Activated CD4-positive, alpha-beta memory T cell treated with anti-CD3 and anti-CD28 coated beads, Interleukin-2, amount 10 ng/mL, durations not matched to agents 7 days and 5 days (primary cell): ENCODE measurements at regions of chr12 and their contacts with region 1.

Region 1: DNA sequence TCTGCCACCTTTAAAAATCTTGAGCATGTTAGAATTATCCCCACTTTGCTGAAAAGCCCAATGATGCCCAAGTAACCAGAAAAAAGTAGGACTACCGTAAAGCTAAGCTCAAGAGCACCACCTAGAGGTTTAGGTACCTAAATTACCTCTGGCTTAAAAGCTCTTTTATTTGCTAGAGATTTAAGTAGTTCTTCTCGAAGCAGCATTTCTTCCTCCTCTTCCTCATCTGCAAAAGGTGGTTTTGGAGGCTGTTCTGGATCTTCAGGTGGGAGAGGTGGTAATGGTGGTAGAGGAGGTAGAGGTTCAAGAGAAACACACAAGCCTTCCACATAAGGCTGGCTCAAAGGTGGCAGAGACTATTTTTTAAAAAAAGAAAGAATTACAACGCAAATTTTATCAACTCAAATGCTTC is 26.9 kb downstream of the ZFC3H1 start:
- DNase-seq: no peak
- H3K4me3 Mint-ChIP-seq: no peak overlapping the region
- H3K27ac Mint-ChIP-seq: no peak overlapping the region
- H3K4me1 Mint-ChIP-seq: peaks cover 14% of the 10 kb centered on the region
- H3K27me3 Mint-ChIP-seq: no peaks in the 10 kb centered on the region

Region 2: GRCh38 chr12:71415336-71416231 is 221.1 kb before region 1 on chr12:
- CTCF ChIA-PET with region 1: interaction called, 16 read pairs
- POLR2A ChIA-PET with region 1: no interaction called
- DNase-seq: no peak
- H3K4me3 Mint-ChIP-seq: no peak overlapping the region
- H3K27ac Mint-ChIP-seq: no peak overlapping the region
- H3K4me1 Mint-ChIP-seq: no peaks in the 10 kb centered on the region
- H3K27me3 Mint-ChIP-seq: peaks cover 15% of the 10 kb centered on the region

Region 3: GRCh38 chr12:71430756-71431155 is 206.0 kb before region 1 on chr12:
- CTCF ChIA-PET with region 1: no interaction called
- POLR2A ChIA-PET with region 1: no interaction called
- DNase-seq: no peak
- H3K4me3 Mint-ChIP-seq: no peak overlapping the region
- H3K27ac Mint-ChIP-seq: no peak overlapping the region
- H3K4me1 Mint-ChIP-seq: no peaks in the 10 kb centered on the region
- H3K27me3 Mint-ChIP-seq: peaks cover 26% of the 10 kb centered on the region

Region 4: DNA sequence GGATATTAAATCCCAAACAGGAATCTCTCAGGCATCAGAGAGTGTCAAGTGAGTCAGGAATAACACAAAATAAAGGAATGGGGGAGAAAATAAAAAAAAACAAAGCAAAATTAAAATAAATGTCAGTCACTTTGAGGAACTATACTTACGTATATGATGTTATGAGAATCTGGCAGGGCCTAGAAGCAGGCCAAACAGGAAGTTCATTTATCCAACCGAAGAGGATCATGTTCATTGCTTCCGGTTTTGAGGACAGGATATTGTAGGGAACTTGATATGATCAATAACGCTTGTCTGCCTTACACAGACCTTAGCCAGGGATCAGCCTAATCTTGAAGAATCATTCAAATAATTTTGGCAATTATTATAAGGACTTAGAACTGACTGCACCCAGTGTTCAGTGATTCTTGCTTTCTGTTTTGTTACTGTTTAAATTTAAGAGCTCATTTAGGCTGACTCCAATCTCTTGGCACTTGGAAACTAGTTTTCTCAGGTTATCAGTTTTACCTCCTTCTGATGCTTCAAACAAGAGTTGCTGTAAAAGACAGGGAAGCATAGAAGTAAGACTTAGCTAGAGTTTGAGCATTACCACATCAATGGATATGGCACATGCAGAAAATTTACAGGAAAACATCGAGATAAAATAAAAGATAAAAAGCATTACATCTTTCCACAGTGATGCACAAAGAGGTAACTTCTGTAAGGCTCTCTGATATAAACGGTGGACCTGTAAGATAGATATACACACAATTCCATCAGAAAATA is 26.5 kb before region 1 on chr12:
- CTCF ChIA-PET with region 1: interaction called, 13 read pairs
- POLR2A ChIA-PET with region 1: interaction called, 3 read pairs
- DNase-seq: no peak
- H3K4me3 Mint-ChIP-seq: no peak overlapping the region
- H3K27ac Mint-ChIP-seq: peak overlapping the region; percentile 63
- H3K4me1 Mint-ChIP-seq: peaks cover 18% of the 10 kb centered on the region
- H3K27me3 Mint-ChIP-seq: no peaks in the 10 kb centered on the region

Region 5: DNA sequence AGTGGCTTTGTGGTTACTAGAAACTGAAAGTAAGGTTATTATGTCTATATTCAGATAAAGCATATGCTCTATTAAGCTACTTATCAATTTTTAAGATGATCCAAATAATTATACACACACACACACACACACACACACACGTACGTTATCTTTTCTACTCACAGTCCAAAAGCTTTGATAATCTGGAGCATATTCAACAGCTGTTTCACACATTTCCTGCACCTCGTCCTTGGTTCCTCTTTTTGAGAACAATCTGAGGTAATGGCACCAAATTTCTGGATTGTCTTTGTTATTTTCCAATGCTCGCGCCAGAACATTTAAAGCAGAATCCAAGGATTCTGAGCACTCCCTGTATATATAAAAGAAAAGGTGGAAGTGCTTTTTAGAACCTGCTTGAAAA is 10.6 kb before region 1 on chr12:
- CTCF ChIA-PET with region 1: interaction called, 22 read pairs
- POLR2A ChIA-PET with region 1: interaction called, 3 read pairs
- DNase-seq: no peak
- H3K4me3 Mint-ChIP-seq: no peak overlapping the region
- H3K27ac Mint-ChIP-seq: peak overlapping the region; percentile 37
- H3K4me1 Mint-ChIP-seq: peaks cover 20% of the 10 kb centered on the region
- H3K27me3 Mint-ChIP-seq: no peaks in the 10 kb centered on the region

Region 6: GRCh38 chr12:71746983-71747611 is 110.4 kb after region 1 on chr12:
- CTCF ChIA-PET with region 1: interaction called, 26 read pairs
- POLR2A ChIA-PET with region 1: no interaction called
- DNase-seq: peak; percentile 48
- H3K4me3 Mint-ChIP-seq: no peak overlapping the region
- H3K27ac Mint-ChIP-seq: no peak overlapping the region
- H3K4me1 Mint-ChIP-seq: no peaks in the 10 kb centered on the region
- H3K27me3 Mint-ChIP-seq: peaks cover 48% of the 10 kb centered on the region